Activated CD4-positive, alpha-beta memory T cell treated with anti-CD3 and anti-CD28 coated beads for 36 hours (primary cell): ENCODE measurements at regions of chr14 and their contacts with region 1.

Region 1: DNA sequence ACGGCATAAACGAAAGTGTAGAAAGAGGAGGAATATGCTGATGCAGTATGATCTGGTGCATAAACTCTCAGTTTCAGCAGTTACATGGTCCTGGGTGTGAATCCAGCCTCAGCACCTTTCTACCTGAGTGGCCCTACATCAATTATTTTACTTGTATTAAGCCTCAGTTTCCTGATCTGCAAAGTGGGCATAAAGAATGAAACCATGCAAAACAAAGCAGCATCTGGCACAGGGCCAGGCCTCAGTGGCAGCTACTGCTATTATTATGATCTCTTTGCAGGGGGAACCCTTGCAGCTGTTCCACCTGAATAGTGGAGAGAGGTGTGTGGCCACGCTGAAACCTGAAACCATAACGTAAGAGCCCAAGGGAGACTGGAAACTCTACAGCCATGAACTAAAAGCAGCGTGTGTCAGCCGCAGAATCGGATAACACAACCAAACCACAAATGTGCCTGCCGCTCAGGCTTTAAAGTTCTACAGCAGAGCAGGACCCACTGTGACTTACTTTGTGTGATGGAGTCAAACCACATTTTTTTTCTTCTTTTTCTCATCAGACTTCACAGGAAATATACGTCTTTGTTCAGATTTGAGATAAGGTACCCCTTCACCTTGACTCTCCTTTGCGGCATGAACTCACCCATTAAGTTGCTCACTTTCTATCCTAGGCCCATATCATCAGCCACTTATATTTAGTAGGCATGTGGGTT is 29.2 kb upstream of the FOS start:
- DNase-seq: peak; percentile 93
- H3K4me3 Mint-ChIP-seq: peak overlapping the region; percentile 33
- H3K27ac Mint-ChIP-seq: peak overlapping the region; percentile 64
- H3K4me1 Mint-ChIP-seq: peaks cover 55% of the 10 kb centered on the region
- H3K27me3 Mint-ChIP-seq: peaks cover 4% of the 10 kb centered on the region

Region 2: GRCh38 chr14:75158843-75159614 is 90.4 kb before region 1 on chr14:
- CTCF ChIA-PET with region 1: no interaction called
- POLR2A ChIA-PET with region 1: no interaction called
- intact Hi-C with region 1: loop called (anchors 5 kb)
- DNase-seq: no peak
- H3K4me3 Mint-ChIP-seq: no peak overlapping the region
- H3K27ac Mint-ChIP-seq: peak overlapping the region; percentile 24
- H3K4me1 Mint-ChIP-seq: peaks cover 69% of the 10 kb centered on the region
- H3K27me3 Mint-ChIP-seq: no peaks in the 10 kb centered on the region

Region 3: GRCh38 chr14:75176142-75176820 is 73.1 kb before region 1 on chr14 and contains the start of gene TMED10:
- CTCF ChIA-PET with region 1: no interaction called
- POLR2A ChIA-PET with region 1: no interaction called
- intact Hi-C with region 1: loop called (anchors 1 kb)
- DNase-seq: peak; percentile 94
- H3K4me3 Mint-ChIP-seq: peak within 1 kb of the TSS; percentile 86
- H3K27ac Mint-ChIP-seq: peak within 1 kb of the TSS; percentile 98
- H3K4me1 Mint-ChIP-seq: peaks cover 42% of the 10 kb centered on the region
- H3K27me3 Mint-ChIP-seq: no peaks in the 10 kb centered on the region
- total RNA-seq, gene TMED10: 189 to 201 TPM

Region 4: DNA sequence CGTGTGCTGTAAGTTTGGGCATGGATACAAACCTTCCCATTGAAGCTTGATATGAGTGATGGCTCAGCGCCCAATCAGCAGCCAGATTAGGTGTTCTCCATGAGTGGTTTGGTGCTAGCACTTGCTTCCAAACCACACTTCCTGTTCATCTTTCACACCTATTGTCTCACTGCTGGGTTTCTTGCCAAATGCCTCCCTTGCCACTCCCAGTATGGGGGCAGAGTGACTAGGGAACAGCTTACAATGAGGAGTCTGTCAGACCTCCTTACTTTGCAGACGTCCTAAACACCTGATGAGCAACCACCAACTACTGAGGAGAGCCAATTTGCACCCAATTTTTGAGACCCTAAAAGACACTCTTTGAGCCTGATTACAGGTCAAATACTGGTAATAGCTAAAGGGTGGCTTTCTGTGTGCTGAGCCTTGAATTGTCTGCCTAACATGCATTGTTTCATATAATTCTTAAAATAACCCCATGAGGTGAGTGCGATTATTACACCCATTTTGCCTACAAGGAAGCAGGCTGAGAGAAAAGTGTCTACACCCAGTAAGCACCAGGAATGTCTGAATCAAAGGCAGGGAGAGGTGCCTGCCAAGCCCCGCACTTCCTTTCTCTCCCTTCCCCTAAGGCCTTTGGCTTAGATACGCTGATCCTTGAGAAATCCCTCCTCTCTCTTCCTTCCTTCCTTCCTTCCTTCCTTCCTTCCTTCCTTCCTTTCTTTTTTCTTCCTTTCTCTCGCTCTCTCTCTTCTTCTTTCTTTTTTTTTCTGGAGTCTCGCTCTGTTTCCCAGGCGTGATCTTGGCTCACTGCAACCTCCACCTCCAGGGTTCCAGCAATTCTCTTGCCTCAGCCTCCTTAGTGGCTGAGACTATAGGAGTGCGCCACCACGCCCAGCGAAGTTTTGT is 19.0 kb before region 1 on chr14:
- CTCF ChIA-PET with region 1: interaction called, 3 read pairs
- POLR2A ChIA-PET with region 1: interaction called, 3 read pairs
- intact Hi-C with region 1: loop called (anchors 1 kb)
- DNase-seq: peak; percentile 76
- H3K4me3 Mint-ChIP-seq: no peak overlapping the region
- H3K27ac Mint-ChIP-seq: no peak overlapping the region
- H3K4me1 Mint-ChIP-seq: peaks cover 46% of the 10 kb centered on the region
- H3K27me3 Mint-ChIP-seq: no peaks in the 10 kb centered on the region

Region 5: GRCh38 chr14:75278422-75279161 is 29.2 kb after region 1 on chr14 and contains the start of gene FOS:
- CTCF ChIA-PET with region 1: no interaction called
- POLR2A ChIA-PET with region 1: interaction called, 9 read pairs
- intact Hi-C with region 1: loop called (anchors 1 kb)
- DNase-seq: peak; percentile 92
- H3K4me3 Mint-ChIP-seq: peak within 1 kb of the TSS; percentile 92
- H3K27ac Mint-ChIP-seq: peak within 1 kb of the TSS; percentile 91
- H3K4me1 Mint-ChIP-seq: peaks cover 48% of the 10 kb centered on the region
- H3K27me3 Mint-ChIP-seq: peaks cover 11% of the 10 kb centered on the region
- total RNA-seq, gene FOS: 21.1 to 26.7 TPM

Region 6: GRCh38 chr14:75542588-75543091 is 293.2 kb after region 1 on chr14:
- CTCF ChIA-PET with region 1: no interaction called
- POLR2A ChIA-PET with region 1: no interaction called
- intact Hi-C with region 1: loop called (anchors 5 kb)
- DNase-seq: peak; percentile 95
- H3K4me3 Mint-ChIP-seq: peak overlapping the region; percentile 68
- H3K27ac Mint-ChIP-seq: peak overlapping the region; percentile 99
- H3K4me1 Mint-ChIP-seq: peaks cover 83% of the 10 kb centered on the region
- H3K27me3 Mint-ChIP-seq: no peaks in the 10 kb centered on the region